ENCODE measurements at regions of chr12 and their contacts with region 1.

Region 1: DNA sequence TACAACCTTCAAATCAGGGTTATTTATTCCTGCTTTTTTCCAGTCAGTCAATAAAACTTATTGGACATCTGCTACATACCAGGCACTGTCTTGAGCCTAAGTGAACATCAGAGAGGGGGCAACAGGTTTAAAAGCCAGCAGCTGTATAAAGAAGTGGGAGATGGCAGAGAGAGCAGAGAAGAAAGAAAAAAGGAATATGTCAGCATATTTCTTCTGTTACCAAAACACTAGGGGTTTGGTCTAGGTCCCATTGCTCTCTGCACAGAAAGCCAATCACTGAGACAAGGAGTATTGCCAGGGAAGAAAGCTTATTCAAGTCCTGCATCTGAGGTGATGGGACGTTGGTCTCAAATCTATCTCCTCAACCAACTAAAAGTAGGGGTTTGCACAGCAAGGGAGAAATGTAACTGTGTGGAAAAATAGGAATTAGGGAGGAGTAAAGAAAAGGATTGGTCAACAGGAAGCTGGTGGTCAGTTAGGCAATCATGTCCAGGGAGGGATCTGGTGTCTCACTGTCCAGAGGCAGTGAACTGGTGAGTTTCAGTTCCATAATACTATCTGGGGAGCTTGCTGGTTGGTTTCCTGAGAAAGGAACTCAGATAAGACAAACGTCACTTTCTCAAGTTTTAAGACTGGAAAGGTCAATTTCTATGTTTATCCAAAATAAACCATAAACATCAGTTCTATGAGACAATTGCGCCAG is 107.5 kb downstream of the PHLDA1 start:
- DNase-seq: no peak
- ATAC-seq: no peak; the same call in 2 of the 3 replicates
- H3K4me3 ChIP-seq: no peak overlapping the region
- H3K27ac ChIP-seq: no peak overlapping the region
- H3K4me1 ChIP-seq: no peaks in the 10 kb centered on the region
- H3K27me3 ChIP-seq: no peaks in the 10 kb centered on the region
- CTCF ChIP-seq: no peak
- EP300 ChIP-seq: no peak
- POLR2A ChIP-seq: no peak
- RAD21 ChIP-seq: no peak

Region 2: GRCh38 chr12:75908961-75909605 is 15.0 kb before region 1 on chr12:
- CTCF ChIA-PET with region 1: no interaction called
- POLR2A ChIA-PET with region 1: interaction called, 3 read pairs
- RAD21 ChIA-PET with region 1: no interaction called
- SMC1A ChIA-PET with region 1: interaction called, 10 read pairs
- in situ Hi-C with region 1: no loop called
- intact Hi-C with region 1: no loop called
- DNase-seq: no peak
- ATAC-seq: no peak
- H3K4me3 ChIP-seq: no peak overlapping the region
- H3K27ac ChIP-seq: no peak overlapping the region
- H3K4me1 ChIP-seq: no peaks in the 10 kb centered on the region
- H3K27me3 ChIP-seq: no peaks in the 10 kb centered on the region
- CTCF ChIP-seq: no peak
- EP300 ChIP-seq: no peak
- POLR2A ChIP-seq: no peak
- RAD21 ChIP-seq: no peak

Region 3: GRCh38 chr12:75951399-75952278 is 27.5 kb after region 1 on chr12:
- CTCF ChIA-PET with region 1: no interaction called
- POLR2A ChIA-PET with region 1: no interaction called
- RAD21 ChIA-PET with region 1: no interaction called
- SMC1A ChIA-PET with region 1: no interaction called
- in situ Hi-C with region 1: no loop called
- intact Hi-C with region 1: no loop called
- DNase-seq: no peak
- ATAC-seq: no peak
- H3K4me3 ChIP-seq: no peak overlapping the region
- H3K27ac ChIP-seq: no peak overlapping the region
- H3K4me1 ChIP-seq: no peaks in the 10 kb centered on the region
- H3K27me3 ChIP-seq: no peaks in the 10 kb centered on the region
- CTCF ChIP-seq: no peak
- EP300 ChIP-seq: no peak
- POLR2A ChIP-seq: no peak
- RAD21 ChIP-seq: no peak

Region 4: DNA sequence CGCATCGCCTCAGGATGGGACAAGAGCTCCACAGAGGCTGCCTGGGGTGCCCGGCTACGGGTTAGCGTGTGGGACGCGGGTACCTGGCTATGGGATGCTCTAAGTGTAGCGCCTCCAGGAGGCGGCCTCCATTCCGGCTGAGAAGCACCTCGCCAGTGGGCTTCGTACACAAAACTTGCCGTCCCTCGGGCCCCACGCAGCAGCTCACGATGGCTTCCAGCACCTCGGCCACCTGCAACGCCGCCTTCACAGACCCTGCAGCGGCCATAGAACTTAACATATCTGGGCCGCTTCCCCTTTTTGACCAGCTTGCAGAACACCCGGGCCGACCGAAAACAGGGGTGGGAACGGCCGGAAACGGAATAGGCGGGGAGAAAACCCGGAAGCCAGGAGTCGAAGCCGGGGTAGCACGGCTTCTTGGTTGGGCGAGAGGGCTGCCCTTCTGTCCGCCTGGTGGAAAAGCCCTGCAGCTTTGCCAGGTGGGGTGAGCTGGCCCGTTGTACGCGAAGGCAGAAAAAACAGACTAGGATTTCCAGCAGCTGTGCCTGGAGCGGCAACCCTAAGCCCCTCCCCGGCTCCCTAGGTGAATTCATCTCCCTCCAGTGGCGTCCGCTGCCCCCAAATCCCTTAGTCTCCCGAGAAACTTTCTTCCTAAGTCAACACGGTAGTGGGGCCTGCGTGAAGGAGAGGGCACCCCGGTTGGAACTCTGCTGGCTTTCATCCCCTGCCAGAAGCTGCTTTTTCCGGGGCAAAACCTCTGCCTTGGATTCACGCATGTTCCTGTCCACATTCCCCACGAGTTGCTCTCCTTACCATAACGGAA is 424.2 kb after region 1 on chr12 and contains the start of gene BBS10:
- CTCF ChIA-PET with region 1: no interaction called
- POLR2A ChIA-PET with region 1: no interaction called
- RAD21 ChIA-PET with region 1: no interaction called
- SMC1A ChIA-PET with region 1: no interaction called
- in situ Hi-C with region 1: no loop called
- intact Hi-C with region 1: no loop called
- DNase-seq: peak; percentile 70
- ATAC-seq: peak; percentile 99
- H3K4me3 ChIP-seq: peak within 1 kb of the TSS; percentile 84
- H3K27ac ChIP-seq: peak within 1 kb of the TSS; percentile 83
- H3K4me1 ChIP-seq: peaks cover 7% of the 10 kb centered on the region; the same call in 1 of the 2 replicates
- H3K27me3 ChIP-seq: no peaks in the 10 kb centered on the region
- CTCF ChIP-seq: peak in 2 of 3 experiments; percentile 22 to 39; a peak in 3 of 6 replicates
- EP300 ChIP-seq: no peak
- POLR2A ChIP-seq: peak; percentile 93
- RAD21 ChIP-seq: 0 out of 2 replicates have a peak, but pooled peaks have one; percentile 7
- polyA plus RNA-seq, gene BBS10: 1.2 to 1.5 TPM

Measured in GM12878 (cell line).